Panc1 (cell line): ENCODE measurements at regions of chr2 and their contacts with region 1.

Region 1: DNA sequence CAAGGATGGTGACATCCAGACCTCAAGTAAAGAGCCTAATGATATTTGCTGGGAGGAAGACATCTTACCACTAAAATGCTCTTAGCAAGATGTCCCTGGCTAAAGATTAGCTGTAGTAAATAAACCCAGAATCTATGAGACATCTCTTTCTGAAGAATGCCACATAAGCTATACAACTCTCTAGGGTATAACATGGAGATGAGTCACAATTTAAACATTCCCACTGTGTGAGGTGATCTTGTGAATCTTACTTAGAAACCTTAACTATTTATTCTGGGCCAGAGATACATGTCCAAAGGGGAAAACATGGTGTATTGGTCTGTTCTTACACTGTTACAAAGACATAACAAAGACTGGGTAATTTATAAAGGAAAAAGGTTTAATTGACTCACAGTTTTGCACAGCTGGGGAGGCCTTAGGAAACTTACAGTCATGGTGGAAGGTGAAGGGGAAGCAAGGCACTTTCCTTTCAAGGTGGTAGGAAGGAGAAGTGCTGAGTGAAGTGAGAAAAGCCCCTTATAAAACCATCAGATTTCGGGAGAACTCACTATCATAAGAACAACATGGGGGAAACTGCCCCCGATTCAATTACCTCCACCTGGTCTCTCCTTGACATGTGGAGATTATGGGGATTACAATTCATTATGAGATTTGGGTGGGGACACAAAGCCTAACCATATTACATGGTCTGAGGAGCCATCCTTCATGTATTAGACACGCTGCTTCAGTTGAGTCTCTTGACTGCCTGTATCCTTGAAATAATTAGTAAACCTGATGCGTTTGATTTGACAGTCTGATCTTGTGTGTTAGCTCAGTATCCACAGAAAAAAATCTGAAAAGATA is 17.1 kb downstream of the KRCC1 start:
- DNase-seq: peak; percentile 48
- ATAC-seq: peak; percentile 79
- H3K4me3 ChIP-seq: no peak overlapping the region
- H3K27ac ChIP-seq: no peak overlapping the region
- H3K4me1 ChIP-seq: no peaks in the 10 kb centered on the region
- H3K27me3 ChIP-seq: no peaks in the 10 kb centered on the region
- CTCF ChIP-seq: no peak

Region 2: GRCh38 chr2:88114889-88115288 is 76.4 kb after region 1 on chr2:
- CTCF ChIA-PET with region 1: interaction called, 11 read pairs
- POLR2A ChIA-PET with region 1: no interaction called
- in situ Hi-C with region 1: no loop called
- intact Hi-C with region 1: no loop called
- DNase-seq: no peak
- ATAC-seq: no peak
- H3K4me3 ChIP-seq: no peak overlapping the region
- H3K27ac ChIP-seq: no peak overlapping the region
- H3K4me1 ChIP-seq: no peaks in the 10 kb centered on the region
- H3K27me3 ChIP-seq: peaks cover 14% of the 10 kb centered on the region
- CTCF ChIP-seq: no peak

Region 3: GRCh38 chr2:88170472-88170892 is 132.0 kb after region 1 on chr2:
- CTCF ChIA-PET with region 1: no interaction called
- POLR2A ChIA-PET with region 1: interaction called, 15 read pairs
- in situ Hi-C with region 1: no loop called
- intact Hi-C with region 1: no loop called
- DNase-seq: no peak
- ATAC-seq: peak; percentile 82
- H3K4me3 ChIP-seq: peak overlapping the region; percentile 59 to 77
- H3K27ac ChIP-seq: peak overlapping the region; percentile 83
- H3K4me1 ChIP-seq: no peaks in the 10 kb centered on the region
- H3K27me3 ChIP-seq: no peaks in the 10 kb centered on the region
- CTCF ChIP-seq: no peak

Region 4: GRCh38 chr2:88377641-88377991 is 339.1 kb after region 1 on chr2:
- CTCF ChIA-PET with region 1: no interaction called
- POLR2A ChIA-PET with region 1: no interaction called
- in situ Hi-C with region 1: no loop called
- intact Hi-C with region 1: no loop called
- DNase-seq: no peak
- ATAC-seq: no peak
- H3K4me3 ChIP-seq: no peak overlapping the region
- H3K27ac ChIP-seq: no peak overlapping the region
- H3K4me1 ChIP-seq: no peaks in the 10 kb centered on the region
- H3K27me3 ChIP-seq: no peaks in the 10 kb centered on the region
- CTCF ChIP-seq: no peak